ENCODE measurements at regions of chr7 and their contacts with region 1.

Region 1: GRCh38 chr7:149067876-149068275 is 22.6 kb downstream of the ZNF786 start:
- DNase-seq: peak; percentile 21
- H3K4me3 Mint-ChIP-seq: no peak overlapping the region
- H3K27ac Mint-ChIP-seq: no peak overlapping the region
- H3K4me1 Mint-ChIP-seq: peaks cover 10% of the 10 kb centered on the region
- H3K27me3 Mint-ChIP-seq: no peaks in the 10 kb centered on the region

Region 2: GRCh38 chr7:149005241-149006050 is 62.4 kb before region 1 on chr7:
- CTCF ChIA-PET with region 1: interaction called, 25 read pairs
- POLR2A ChIA-PET with region 1: no interaction called
- DNase-seq: peak; percentile 85
- H3K4me3 Mint-ChIP-seq: no peak overlapping the region
- H3K27ac Mint-ChIP-seq: no peak overlapping the region
- H3K4me1 Mint-ChIP-seq: peaks cover 8% of the 10 kb centered on the region
- H3K27me3 Mint-ChIP-seq: no peaks in the 10 kb centered on the region

Region 3: GRCh38 chr7:149028346-149029109 is 39.3 kb before region 1 on chr7 and contains the start of gene PDIA4:
- CTCF ChIA-PET with region 1: interaction called, 13 read pairs
- POLR2A ChIA-PET with region 1: no interaction called
- DNase-seq: peak; percentile 100
- H3K4me3 Mint-ChIP-seq: peak within 1 kb of the TSS; percentile 96
- H3K27ac Mint-ChIP-seq: peak within 1 kb of the TSS; percentile 94
- H3K4me1 Mint-ChIP-seq: peaks cover 40% of the 10 kb centered on the region
- H3K27me3 Mint-ChIP-seq: no peaks in the 10 kb centered on the region
- total RNA-seq, gene PDIA4: 94.8 to 97.4 TPM

Region 4: GRCh38 chr7:149046416-149046815 is 21.5 kb before region 1 on chr7:
- CTCF ChIA-PET with region 1: interaction called, 15 read pairs
- POLR2A ChIA-PET with region 1: interaction called, 4 read pairs
- DNase-seq: no peak
- H3K4me3 Mint-ChIP-seq: no peak overlapping the region
- H3K27ac Mint-ChIP-seq: no peak overlapping the region
- H3K4me1 Mint-ChIP-seq: no peaks in the 10 kb centered on the region
- H3K27me3 Mint-ChIP-seq: no peaks in the 10 kb centered on the region

Region 5: DNA sequence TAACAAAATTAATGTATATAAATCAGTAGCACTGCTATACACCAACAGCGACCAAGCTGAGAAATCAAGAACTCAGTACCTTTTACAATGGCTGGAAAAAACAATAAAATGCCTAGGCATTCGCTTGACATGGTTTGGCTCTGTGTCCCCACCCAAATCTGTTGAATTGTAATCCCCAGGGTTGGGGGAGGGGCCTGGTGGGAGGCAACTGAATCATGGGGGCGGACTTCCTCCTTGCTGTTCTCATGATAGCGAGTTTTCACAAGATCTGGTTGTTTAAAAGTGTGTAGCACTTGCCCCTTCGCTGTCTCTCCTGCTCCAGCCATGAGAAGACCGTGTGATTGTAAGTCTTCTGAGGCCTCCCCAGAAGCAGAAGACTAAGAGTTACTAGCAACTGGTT is 14.0 kb after region 1 on chr7:
- CTCF ChIA-PET with region 1: interaction called, 15 read pairs
- POLR2A ChIA-PET with region 1: no interaction called
- DNase-seq: no peak
- H3K4me3 Mint-ChIP-seq: no peak overlapping the region
- H3K27ac Mint-ChIP-seq: no peak overlapping the region
- H3K4me1 Mint-ChIP-seq: peaks cover 2% of the 10 kb centered on the region
- H3K27me3 Mint-ChIP-seq: no peaks in the 10 kb centered on the region

Measured in activated CD4-positive, alpha-beta T cell treated with anti-CD3 and anti-CD28 coated beads, Interleukin-2, amount 10 ng/mL, durations not matched to agents 7 days and 5 days (primary cell).